GM12878 (cell line): ENCODE measurements at regions of chr22 and their contacts with region 1.

Region 1: DNA sequence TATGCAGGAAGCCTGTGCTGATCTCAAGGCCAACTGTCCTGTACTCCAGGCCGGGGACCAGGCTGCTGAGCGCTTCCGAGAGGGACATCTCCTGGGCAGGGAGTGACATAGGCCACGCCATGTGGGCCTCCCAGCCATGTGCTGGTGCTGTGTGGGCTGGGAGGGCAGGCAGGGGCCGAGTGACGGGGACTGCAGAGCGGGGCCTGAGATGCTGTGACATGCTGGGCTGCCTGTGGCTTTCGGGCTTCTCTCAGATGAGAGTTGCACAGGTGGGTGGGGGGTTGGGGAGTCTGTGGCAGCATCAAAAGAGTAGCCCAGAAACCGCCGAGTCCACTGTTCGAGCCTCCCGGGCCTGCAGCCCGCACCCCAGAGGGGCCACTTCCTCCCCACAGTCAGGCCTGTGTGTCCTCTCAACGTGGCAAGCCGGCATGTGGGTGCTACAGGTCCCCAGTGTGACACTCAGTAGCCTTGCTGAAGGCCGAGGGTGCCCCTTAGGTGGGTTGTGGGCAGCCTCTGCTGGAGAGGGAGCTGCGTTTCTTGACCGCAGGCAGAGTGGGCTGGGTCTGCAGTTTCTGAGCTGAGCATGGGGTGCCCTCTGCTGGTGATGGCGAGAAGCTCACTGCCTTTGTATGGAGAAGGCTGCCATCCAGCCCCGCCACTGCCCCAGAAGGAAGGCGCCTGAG is 101.2 kb downstream of the BCR start:
- DNase-seq: peak; percentile 25
- ATAC-seq: peak; percentile 94
- H3K4me3 ChIP-seq: no peak overlapping the region
- H3K27ac ChIP-seq: 0 out of 2 replicates have a peak overlapping the region, but pooled peaks have one; percentile 13
- H3K4me1 ChIP-seq: peaks cover 11% of the 10 kb centered on the region
- H3K27me3 ChIP-seq: no peaks in the 10 kb centered on the region
- CTCF ChIP-seq: peak; percentile 93 to 96 (median 94); a peak in 5 of 6 replicates
- EP300 ChIP-seq: no peak
- POLR2A ChIP-seq: no peak
- RAD21 ChIP-seq: peak; percentile 91

Region 2: GRCh38 chr22:22968366-22968765 is 313.2 kb before region 1 on chr22:
- CTCF ChIA-PET with region 1: no interaction called
- POLR2A ChIA-PET with region 1: no interaction called
- RAD21 ChIA-PET with region 1: no interaction called
- SMC1A ChIA-PET with region 1: no interaction called
- in situ Hi-C with region 1: loop called (anchors 5 kb)
- intact Hi-C with region 1: no loop called
- DNase-seq: no peak
- ATAC-seq: no peak
- H3K4me3 ChIP-seq: no peak overlapping the region
- H3K27ac ChIP-seq: no peak overlapping the region
- H3K4me1 ChIP-seq: no peaks in the 10 kb centered on the region
- H3K27me3 ChIP-seq: no peaks in the 10 kb centered on the region
- CTCF ChIP-seq: no peak
- EP300 ChIP-seq: no peak
- POLR2A ChIP-seq: no peak
- RAD21 ChIP-seq: no peak

Region 3: DNA sequence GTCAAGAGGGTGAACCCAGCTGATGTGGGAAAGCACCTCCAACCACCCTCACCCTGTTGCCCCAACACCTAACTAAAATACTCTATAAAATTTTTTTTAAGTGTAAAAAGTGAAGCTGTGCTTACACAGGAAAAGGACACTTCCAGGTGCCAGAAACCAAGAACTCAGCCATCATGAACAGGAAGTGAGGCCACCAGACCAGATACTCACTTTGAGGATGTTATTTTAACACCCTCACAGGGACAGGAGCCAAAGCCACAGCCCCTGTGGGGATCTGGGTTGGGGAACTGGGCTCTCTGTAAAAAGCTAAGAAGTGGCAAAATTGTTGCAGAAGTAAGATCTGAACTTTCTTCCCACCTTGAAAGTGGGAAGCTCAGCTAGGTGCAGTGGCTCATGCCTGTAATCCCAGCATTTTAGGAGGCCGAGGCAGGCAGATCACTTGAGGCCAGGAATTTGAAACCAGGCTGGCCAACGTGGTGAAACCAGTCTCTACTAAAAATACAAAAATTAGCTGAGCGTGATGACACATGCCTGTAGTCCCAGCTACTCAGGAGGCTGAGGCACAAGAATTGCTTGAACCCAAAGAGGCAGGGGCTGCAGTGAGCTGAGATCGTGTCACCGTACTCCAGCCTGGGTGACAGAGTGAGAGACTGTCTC is 143.5 kb before region 1 on chr22:
- CTCF ChIA-PET with region 1: interaction called, 12 read pairs
- POLR2A ChIA-PET with region 1: no interaction called
- RAD21 ChIA-PET with region 1: interaction called, 13 read pairs
- SMC1A ChIA-PET with region 1: interaction called, 3 read pairs
- in situ Hi-C with region 1: no loop called
- intact Hi-C with region 1: no loop called
- DNase-seq: peak; percentile 86
- ATAC-seq: peak; percentile 72
- H3K4me3 ChIP-seq: 0 out of 2 replicates have a peak overlapping the region, but pooled peaks have one; percentile 7
- H3K27ac ChIP-seq: peak overlapping the region; percentile 86
- H3K4me1 ChIP-seq: peaks cover 60% of the 10 kb centered on the region
- H3K27me3 ChIP-seq: no peaks in the 10 kb centered on the region
- CTCF ChIP-seq: no peak
- EP300 ChIP-seq: peak in 1 of 2 experiments; percentile 65; a peak in 1 of 4 replicates
- POLR2A ChIP-seq: no peak
- RAD21 ChIP-seq: no peak

Region 4: DNA sequence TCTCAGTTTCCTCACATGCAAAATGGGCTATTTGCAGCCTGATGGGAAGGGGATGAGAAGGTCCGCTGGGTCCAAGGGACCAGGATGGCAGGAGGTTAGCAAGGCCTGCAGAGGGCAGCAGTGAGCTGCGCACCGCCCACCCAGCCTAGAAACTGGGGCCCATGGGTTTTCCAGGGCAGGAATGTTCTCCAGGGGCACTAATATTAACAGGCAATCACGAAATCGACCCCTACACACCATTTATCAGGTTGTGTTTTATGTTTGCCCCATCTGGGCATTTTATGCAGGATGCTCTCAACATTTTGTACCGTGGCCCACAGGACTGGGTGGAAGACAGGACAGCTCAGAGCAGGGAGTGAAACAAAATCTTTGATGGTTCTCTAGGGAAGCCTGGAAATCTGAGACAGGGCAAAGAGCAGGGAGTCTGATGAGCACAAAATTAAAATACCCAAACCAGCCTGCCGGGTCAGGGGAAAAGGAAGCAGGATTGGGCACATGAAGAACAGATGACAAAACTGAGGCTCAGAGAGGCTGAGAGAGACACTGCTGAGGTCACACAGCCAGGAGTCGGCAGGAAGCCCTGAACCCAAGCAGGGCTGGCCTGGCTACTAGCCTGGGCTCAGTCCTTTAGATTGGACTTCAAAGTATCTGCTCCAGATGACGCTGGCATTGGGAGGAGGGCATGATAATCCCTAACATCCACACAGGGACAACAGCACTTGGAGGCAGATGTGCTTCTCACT is 102.9 kb before region 1 on chr22:
- CTCF ChIA-PET with region 1: interaction called, 209 read pairs
- POLR2A ChIA-PET with region 1: interaction called, 4 read pairs
- RAD21 ChIA-PET with region 1: interaction called, 167 read pairs
- SMC1A ChIA-PET with region 1: interaction called, 57 read pairs
- in situ Hi-C with region 1: loop called (anchors 5 kb)
- intact Hi-C with region 1: loop called (anchors 1 kb)
- DNase-seq: no peak
- ATAC-seq: peak; percentile 51
- H3K4me3 ChIP-seq: no peak overlapping the region
- H3K27ac ChIP-seq: no peak overlapping the region
- H3K4me1 ChIP-seq: peaks cover 59% of the 10 kb centered on the region
- H3K27me3 ChIP-seq: no peaks in the 10 kb centered on the region
- CTCF ChIP-seq: peak; percentile 95 to 98 (median 97); a peak in 5 of 6 replicates
- EP300 ChIP-seq: no peak
- POLR2A ChIP-seq: no peak
- RAD21 ChIP-seq: peak; percentile 92

Region 5: GRCh38 chr22:23219822-23220484 is 61.6 kb before region 1 on chr22:
- CTCF ChIA-PET with region 1: interaction called, 10 read pairs
- POLR2A ChIA-PET with region 1: no interaction called
- RAD21 ChIA-PET with region 1: interaction called, 3 read pairs
- SMC1A ChIA-PET with region 1: interaction called, 4 read pairs
- in situ Hi-C with region 1: no loop called
- intact Hi-C with region 1: no loop called
- DNase-seq: peak; percentile 67
- ATAC-seq: peak; percentile 93
- H3K4me3 ChIP-seq: peak overlapping the region; percentile 24; the same call in 1 of the 2 replicates
- H3K27ac ChIP-seq: peak overlapping the region; percentile 72
- H3K4me1 ChIP-seq: peaks cover 44% of the 10 kb centered on the region
- H3K27me3 ChIP-seq: no peaks in the 10 kb centered on the region
- CTCF ChIP-seq: no peak
- EP300 ChIP-seq: no peak
- POLR2A ChIP-seq: no peak; the same call in 1 of the 2 replicates
- RAD21 ChIP-seq: no peak

Region 6: DNA sequence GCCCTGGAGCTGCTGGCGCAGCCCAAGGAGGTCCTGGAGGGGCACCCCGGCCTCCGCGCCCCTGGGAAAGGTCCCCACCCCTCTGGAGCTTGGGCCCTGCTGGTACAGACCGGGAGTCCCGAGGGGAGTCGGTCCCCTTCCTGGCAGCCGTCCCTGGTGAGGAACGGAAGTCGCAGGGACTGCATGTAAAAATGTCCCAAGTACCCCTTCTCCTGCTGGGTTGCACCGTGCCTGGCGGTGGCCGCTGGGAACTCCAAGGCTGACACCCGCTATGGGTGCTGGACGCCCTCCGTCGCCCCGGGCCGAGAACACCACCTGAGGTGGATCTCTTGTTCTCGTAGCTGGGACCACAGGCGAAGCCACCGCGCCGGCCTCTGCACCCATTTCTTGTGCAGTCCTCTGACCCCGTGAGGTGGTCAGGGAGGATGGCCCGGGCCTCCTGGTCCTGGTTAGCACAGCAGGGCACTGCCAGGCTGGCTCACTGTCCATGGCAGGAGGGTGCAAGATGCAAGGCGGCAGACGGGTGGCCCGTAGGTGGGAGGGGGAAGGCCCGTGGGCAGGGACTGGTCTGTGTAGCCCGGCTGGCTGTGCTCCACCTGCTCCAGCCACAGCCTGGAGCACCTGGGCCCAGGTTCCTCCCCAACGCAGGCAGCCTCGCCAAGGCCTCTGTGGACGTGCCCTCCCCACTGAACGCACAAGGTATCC is 133.3 kb after region 1 on chr22:
- CTCF ChIA-PET with region 1: no interaction called
- POLR2A ChIA-PET with region 1: no interaction called
- RAD21 ChIA-PET with region 1: no interaction called
- SMC1A ChIA-PET with region 1: no interaction called
- in situ Hi-C with region 1: no loop called
- intact Hi-C with region 1: no loop called
- DNase-seq: no peak
- ATAC-seq: no peak
- H3K4me3 ChIP-seq: no peak overlapping the region
- H3K27ac ChIP-seq: no peak overlapping the region
- H3K4me1 ChIP-seq: no peaks in the 10 kb centered on the region
- H3K27me3 ChIP-seq: peaks cover 2% of the 10 kb centered on the region in 2 experiments; a peak in 2 of 4 replicates
- CTCF ChIP-seq: no peak
- EP300 ChIP-seq: no peak
- POLR2A ChIP-seq: no peak
- RAD21 ChIP-seq: no peak